GM12878 (cell line): ENCODE measurements at regions of chr10 and their contacts with region 1.

Region 1: DNA sequence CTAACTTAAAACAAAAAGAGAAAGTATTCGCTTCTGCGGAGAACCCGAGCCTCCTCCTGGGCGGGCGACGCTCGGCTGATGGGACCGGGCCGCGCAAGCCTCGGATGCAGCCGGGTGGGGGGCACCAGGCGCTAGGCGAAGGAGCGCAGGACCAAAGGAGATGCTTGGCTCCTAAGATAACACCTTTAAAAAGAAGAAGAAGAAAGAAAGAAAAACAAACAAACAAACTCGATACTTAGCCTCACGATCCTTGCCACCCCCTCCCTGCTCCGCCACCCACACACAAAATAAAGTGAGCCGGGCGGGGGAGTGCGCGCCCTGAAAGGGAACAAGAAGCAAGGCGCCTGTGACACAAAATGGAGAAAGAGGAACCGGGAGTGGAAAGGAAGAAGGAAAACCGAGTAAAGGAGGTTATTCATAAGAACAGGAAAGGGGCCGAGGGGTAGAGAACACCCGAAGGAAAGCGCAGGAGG is 34.0 kb upstream of the EBLN1 start:
- DNase-seq: no peak
- ATAC-seq: peak; percentile 66
- H3K4me3 ChIP-seq: peak overlapping the region; percentile 79
- H3K27ac ChIP-seq: peak overlapping the region; percentile 90
- H3K4me1 ChIP-seq: peaks cover 7% of the 10 kb centered on the region
- H3K27me3 ChIP-seq: peaks cover 0 to 2% of the 10 kb centered on the region in 2 experiments; a peak in 3 of 4 replicates
- CTCF ChIP-seq: no peak
- EP300 ChIP-seq: no peak
- POLR2A ChIP-seq: peak; percentile 62; the same call in 1 of the 2 replicates
- RAD21 ChIP-seq: no peak

Region 2: DNA sequence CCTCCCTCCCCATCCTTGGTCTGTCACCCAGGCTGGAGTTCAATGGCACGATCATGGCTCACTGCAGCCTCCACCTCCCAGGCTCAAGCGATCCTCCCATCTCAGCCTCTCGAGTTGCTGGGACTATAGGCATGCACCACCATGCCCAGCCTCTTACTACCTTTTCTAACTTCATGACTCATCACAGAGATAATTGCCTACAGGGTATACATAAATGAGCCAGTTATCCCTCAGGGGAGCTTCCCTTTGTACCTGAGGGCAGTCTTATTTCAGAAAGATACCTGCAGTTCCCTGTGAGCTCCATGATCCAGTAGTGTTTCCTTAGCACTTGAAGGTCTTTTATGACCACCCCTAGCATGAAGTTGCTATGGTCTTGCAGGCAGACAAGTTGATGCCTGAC is 154.1 kb before region 1 on chr10:
- CTCF ChIA-PET with region 1: no interaction called
- POLR2A ChIA-PET with region 1: no interaction called
- RAD21 ChIA-PET with region 1: no interaction called
- SMC1A ChIA-PET with region 1: no interaction called
- in situ Hi-C with region 1: no loop called
- intact Hi-C with region 1: no loop called
- DNase-seq: no peak
- ATAC-seq: no peak
- H3K4me3 ChIP-seq: no peak overlapping the region
- H3K27ac ChIP-seq: no peak overlapping the region
- H3K4me1 ChIP-seq: no peaks in the 10 kb centered on the region
- H3K27me3 ChIP-seq: no peaks in the 10 kb centered on the region
- CTCF ChIP-seq: no peak
- EP300 ChIP-seq: no peak
- POLR2A ChIP-seq: no peak
- RAD21 ChIP-seq: no peak

Region 3: GRCh38 chr10:22301193-22301592 is 49.4 kb after region 1 on chr10:
- CTCF ChIA-PET with region 1: no interaction called
- POLR2A ChIA-PET with region 1: no interaction called
- RAD21 ChIA-PET with region 1: no interaction called
- SMC1A ChIA-PET with region 1: no interaction called
- in situ Hi-C with region 1: no loop called
- intact Hi-C with region 1: no loop called
- DNase-seq: no peak
- ATAC-seq: no peak
- H3K4me3 ChIP-seq: no peak overlapping the region
- H3K27ac ChIP-seq: no peak overlapping the region
- H3K4me1 ChIP-seq: no peaks in the 10 kb centered on the region
- H3K27me3 ChIP-seq: no peaks in the 10 kb centered on the region
- CTCF ChIP-seq: no peak
- EP300 ChIP-seq: no peak
- POLR2A ChIP-seq: no peak
- RAD21 ChIP-seq: no peak

Region 4: GRCh38 chr10:22436884-22437619 is 185.3 kb after region 1 on chr10:
- CTCF ChIA-PET with region 1: no interaction called
- POLR2A ChIA-PET with region 1: no interaction called
- RAD21 ChIA-PET with region 1: no interaction called
- SMC1A ChIA-PET with region 1: no interaction called
- in situ Hi-C with region 1: no loop called
- intact Hi-C with region 1: loop called (anchors 10 kb)
- DNase-seq: peak; percentile 36
- ATAC-seq: peak; percentile 88
- H3K4me3 ChIP-seq: peak overlapping the region; percentile 71
- H3K27ac ChIP-seq: peak overlapping the region; percentile 45
- H3K4me1 ChIP-seq: peaks cover 10% of the 10 kb centered on the region
- H3K27me3 ChIP-seq: no peaks in the 10 kb centered on the region; a peak in 1 of 4 replicates
- CTCF ChIP-seq: 0 out of 6 replicates have a peak, but pooled peaks of 2 of the 3 experiments have one; percentile 1 to 6
- EP300 ChIP-seq: no peak
- POLR2A ChIP-seq: peak; percentile 98
- RAD21 ChIP-seq: peak; percentile 32; the same call in 1 of the 2 replicates

Region 5: DNA sequence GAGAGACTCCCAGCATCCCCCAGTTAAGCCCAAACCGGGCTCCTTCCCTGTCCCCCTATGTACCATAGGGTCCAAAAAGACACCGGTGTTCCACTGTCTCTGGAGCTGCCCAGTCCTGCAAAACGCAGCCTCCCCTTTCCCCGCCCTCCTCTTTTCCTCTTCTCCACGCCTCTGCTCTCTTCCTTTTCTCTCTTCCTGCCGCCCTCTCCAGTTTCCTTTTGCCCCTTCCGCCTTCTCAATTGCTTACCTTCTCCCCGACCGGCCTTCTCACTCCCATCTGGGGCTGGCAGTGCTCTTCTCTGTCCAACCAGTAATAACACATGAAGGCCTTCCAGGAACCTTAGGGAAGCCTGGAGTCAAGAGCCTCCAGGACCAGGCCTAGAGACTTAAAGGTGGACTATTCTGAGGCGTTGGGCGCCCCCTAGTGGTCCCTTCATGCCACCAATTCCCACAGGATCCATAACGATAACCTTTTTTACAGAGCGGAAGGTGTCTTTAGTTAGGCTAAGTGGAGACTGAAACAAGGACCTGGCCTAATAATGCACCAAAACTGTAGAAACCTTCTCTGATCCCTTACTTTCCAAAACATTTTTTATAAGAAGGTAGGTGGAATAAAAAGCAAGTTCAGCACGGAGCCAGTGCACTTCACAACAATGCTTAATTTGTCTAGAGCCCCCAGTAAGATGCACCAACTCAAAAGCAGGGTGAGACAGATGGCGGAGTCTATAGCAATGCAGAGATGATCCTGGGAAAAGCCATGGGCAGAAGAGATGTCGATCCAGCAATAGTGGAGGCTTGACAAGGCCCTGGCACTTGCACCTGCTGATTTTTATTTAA is 816.4 kb after region 1 on chr10:
- CTCF ChIA-PET with region 1: no interaction called
- POLR2A ChIA-PET with region 1: no interaction called
- RAD21 ChIA-PET with region 1: no interaction called
- SMC1A ChIA-PET with region 1: no interaction called
- in situ Hi-C with region 1: no loop called
- intact Hi-C with region 1: loop called (anchors 5 kb)
- DNase-seq: peak; percentile 27
- ATAC-seq: peak; percentile 84
- H3K4me3 ChIP-seq: no peak overlapping the region
- H3K27ac ChIP-seq: no peak overlapping the region
- H3K4me1 ChIP-seq: peaks cover 28% of the 10 kb centered on the region
- H3K27me3 ChIP-seq: no peaks in the 10 kb centered on the region
- CTCF ChIP-seq: peak; percentile 79 to 81 (median 80)
- EP300 ChIP-seq: no peak
- POLR2A ChIP-seq: no peak
- RAD21 ChIP-seq: peak; percentile 85